ENCODE measurements at regions of chr5 and their contacts with region 1.

Region 1: GRCh38 chr5:61331407-61332357 is at the start of gene ZSWIM6:
- DNase-seq: peak; percentile 99
- H3K4me3 Mint-ChIP-seq: peak within 1 kb of the TSS; percentile 76
- H3K27ac Mint-ChIP-seq: peak within 1 kb of the TSS; percentile 93
- H3K4me1 Mint-ChIP-seq: peaks cover 45% of the 10 kb centered on the region
- H3K27me3 Mint-ChIP-seq: no peaks in the 10 kb centered on the region
- CTCF ChIP-seq: no peak
- total RNA-seq, gene ZSWIM6: 12.0 and 13.5 TPM in 2 replicates

Region 2: GRCh38 chr5:60677844-60678664 is 653.6 kb before region 1 on chr5:
- CTCF ChIA-PET with region 1: interaction called, 3 read pairs
- POLR2A ChIA-PET with region 1: interaction called, 3 read pairs
- intact Hi-C with region 1: loop called (anchors 2 kb)
- DNase-seq: peak; percentile 58
- H3K4me3 Mint-ChIP-seq: peak overlapping the region; percentile 13
- H3K27ac Mint-ChIP-seq: peak overlapping the region; percentile 84
- H3K4me1 Mint-ChIP-seq: no peaks in the 10 kb centered on the region
- H3K27me3 Mint-ChIP-seq: no peaks in the 10 kb centered on the region
- CTCF ChIP-seq: peak; percentile 47

Region 3: DNA sequence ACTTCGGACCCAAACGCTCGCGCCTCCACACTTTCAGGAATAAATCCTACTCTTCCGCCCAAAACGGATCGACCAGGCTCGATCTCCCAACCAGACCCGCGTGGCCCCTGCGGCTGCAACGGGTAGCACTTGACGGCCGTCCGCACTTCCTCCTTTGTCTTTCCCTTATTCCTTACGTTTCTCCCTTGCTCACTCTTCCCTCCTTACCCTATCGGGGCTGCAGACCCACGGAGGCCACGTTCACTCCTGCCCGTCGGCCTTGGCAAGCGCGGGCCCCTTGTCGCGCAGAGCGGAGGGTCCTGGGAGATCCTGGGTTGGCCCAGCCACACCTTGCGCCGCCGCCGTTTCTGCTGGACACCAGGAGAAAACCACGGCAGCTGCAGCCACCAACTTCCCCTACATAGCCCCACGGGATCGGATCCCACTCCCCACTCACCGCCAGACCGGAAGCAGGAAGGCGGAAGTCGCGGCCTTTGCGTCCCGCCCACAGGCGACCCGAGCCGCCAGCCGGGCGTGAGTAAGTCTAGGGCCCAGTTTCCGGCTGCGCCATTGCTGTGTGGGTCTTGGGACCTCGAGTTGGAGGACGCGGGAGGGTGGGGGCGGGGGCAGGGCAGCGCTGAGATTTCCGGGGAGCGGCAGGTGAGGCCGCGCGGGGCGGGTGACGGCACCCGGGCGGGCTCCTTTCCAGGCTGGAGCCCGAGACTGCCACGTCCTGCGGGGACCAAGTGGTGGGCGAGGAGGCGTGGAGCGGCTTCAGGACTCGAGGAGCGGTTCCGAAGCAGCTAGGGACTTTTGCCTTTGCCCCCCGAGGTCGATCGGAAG is 169.5 kb before region 1 on chr5 and contains the start of gene SMIM15:
- CTCF ChIA-PET with region 1: interaction called, 26 read pairs
- POLR2A ChIA-PET with region 1: interaction called, 62 read pairs
- intact Hi-C with region 1: loop called (anchors 1 kb)
- DNase-seq: peak; percentile 90
- H3K4me3 Mint-ChIP-seq: peak within 1 kb of the TSS; percentile 93
- H3K27ac Mint-ChIP-seq: peak within 1 kb of the TSS; percentile 97
- H3K4me1 Mint-ChIP-seq: peaks cover 8% of the 10 kb centered on the region
- H3K27me3 Mint-ChIP-seq: no peaks in the 10 kb centered on the region
- CTCF ChIP-seq: no peak
- total RNA-seq, gene SMIM15: 92.5 and 95.8 TPM in 2 replicates

Region 4: DNA sequence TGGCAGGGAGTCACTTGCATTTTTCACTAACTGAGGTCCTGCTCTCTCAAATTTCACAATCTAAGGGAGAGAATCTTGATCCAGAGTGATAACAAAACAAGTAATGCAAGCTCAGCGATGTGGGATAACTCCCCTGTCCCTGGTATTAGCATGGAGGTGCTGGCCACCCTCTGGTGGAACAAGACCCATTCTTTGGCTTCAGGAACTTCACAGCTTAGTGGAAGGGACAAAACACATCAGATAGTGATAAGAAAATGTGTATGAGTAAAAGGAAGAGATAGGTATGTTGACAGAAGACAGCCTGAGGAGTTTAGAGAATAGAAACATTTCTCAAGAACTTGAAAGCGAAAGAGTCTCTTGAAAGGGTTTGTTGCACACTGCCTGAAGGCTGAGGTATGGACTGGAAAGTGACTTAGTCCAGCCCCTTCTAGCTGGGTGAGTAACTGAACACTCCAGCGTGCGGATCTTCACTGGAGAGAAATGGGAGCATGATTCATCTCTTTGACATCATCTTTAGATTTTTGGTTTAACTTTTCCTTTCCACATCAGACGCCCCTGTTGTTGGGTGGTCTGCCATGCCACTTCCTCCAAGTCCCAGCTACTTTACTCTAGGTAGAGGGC is 25.1 kb before region 1 on chr5:
- CTCF ChIA-PET with region 1: interaction called, 13 read pairs
- POLR2A ChIA-PET with region 1: interaction called, 120 read pairs
- intact Hi-C with region 1: loop called (anchors 1 kb)
- DNase-seq: peak; percentile 55
- H3K4me3 Mint-ChIP-seq: no peak overlapping the region
- H3K27ac Mint-ChIP-seq: peak overlapping the region; percentile 66
- H3K4me1 Mint-ChIP-seq: peaks cover 30% of the 10 kb centered on the region
- H3K27me3 Mint-ChIP-seq: no peaks in the 10 kb centered on the region
- CTCF ChIP-seq: no peak

Region 5: DNA sequence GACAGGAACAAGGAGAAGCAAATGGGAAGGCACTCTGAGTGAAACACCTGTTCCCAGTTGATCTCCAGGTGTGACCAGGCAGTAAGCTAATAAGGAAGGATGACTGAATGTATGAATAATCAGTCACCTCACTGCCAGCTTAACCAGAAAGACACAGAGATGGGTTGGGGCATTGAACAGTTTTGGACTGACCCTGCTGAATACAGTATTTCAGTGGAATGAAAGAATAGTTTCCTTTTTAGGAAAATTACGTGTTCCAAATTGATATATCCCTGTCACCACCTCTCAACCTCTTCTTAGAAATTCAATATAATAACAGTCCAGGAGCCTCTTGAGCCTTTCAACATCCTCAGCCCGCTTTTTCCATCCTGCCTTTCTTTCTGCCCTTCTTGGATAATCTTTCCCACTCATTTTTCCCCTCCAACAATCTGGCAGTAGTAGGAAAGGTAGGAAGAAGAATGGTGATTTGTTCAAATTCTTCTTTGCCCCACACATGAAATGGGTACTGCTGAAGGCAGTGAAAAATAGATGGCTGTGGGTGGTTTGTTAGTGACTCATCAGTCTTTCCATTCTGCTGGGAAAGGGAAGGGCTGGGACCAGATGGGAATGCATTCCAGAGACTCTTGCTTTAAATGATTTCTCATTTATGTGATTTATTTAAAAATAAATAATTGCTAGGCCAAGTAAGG is 118.3 kb after region 1 on chr5:
- CTCF ChIA-PET with region 1: interaction called, 3 read pairs
- POLR2A ChIA-PET with region 1: interaction called, 8 read pairs
- intact Hi-C with region 1: loop called (anchors 10 kb)
- DNase-seq: peak; percentile 83
- H3K4me3 Mint-ChIP-seq: peak overlapping the region; percentile 46
- H3K27ac Mint-ChIP-seq: peak overlapping the region; percentile 88
- H3K4me1 Mint-ChIP-seq: peaks cover 12% of the 10 kb centered on the region
- H3K27me3 Mint-ChIP-seq: no peaks in the 10 kb centered on the region
- CTCF ChIP-seq: no peak

Region 6: DNA sequence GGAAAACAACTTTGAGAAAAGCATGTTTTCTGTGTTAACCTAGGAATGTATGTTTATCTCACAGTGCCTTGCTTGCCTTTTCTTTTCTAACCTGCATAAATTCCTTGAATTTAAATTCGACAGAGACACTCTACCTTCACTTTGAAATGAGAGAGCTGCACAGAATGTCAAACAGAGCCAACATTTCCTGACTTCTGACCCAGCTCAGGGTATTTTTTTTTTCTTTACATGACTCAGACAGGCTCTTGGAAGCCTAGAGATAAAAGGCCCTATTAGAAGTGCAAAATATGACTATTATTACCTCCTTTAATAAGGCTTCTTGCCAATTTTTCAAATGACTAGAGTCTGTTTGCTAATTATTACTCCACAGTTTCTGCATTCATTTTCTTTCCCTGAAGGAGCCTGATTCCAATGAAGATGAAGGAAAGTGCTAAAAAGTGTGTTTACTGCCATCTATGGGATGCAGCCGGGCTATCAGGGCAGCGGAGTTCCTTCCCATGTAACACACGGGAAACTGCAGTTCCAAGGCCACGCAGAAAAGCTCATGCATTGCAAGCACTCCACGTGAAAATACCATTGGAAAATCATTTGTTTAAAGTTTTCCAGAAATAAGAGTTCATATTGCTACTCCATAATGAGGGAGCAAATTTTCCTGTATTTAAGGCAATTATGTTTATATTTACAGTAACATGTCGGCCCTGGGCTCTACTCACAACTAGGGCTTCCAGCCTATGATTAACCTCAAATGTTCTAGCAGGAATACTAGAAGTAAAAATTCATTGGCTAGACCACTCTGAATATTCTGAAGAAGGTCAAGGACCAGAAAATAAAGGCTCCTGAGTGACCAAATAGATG is 486.0 kb after region 1 on chr5:
- CTCF ChIA-PET with region 1: interaction called, 3 read pairs
- POLR2A ChIA-PET with region 1: interaction called, 5 read pairs
- intact Hi-C with region 1: loop called (anchors 2 kb)
- DNase-seq: peak; percentile 53
- H3K4me3 Mint-ChIP-seq: no peak overlapping the region
- H3K27ac Mint-ChIP-seq: no peak overlapping the region
- H3K4me1 Mint-ChIP-seq: peaks cover 17% of the 10 kb centered on the region
- H3K27me3 Mint-ChIP-seq: no peaks in the 10 kb centered on the region
- CTCF ChIP-seq: peak; percentile 51

Measured in MCF 10A (cell line).